Activated CD4-positive, alpha-beta memory T cell treated with anti-CD3 and anti-CD28 coated beads for 36 hours (primary cell): ENCODE measurements at regions of chr5 and their contacts with region 1.

Region 1: GRCh38 chr5:82641331-82642003 is 363.3 kb upstream of the RPS23 start:
- DNase-seq: peak; percentile 12
- H3K4me3 Mint-ChIP-seq: no peak overlapping the region
- H3K27ac Mint-ChIP-seq: no peak overlapping the region
- H3K4me1 Mint-ChIP-seq: no peaks in the 10 kb centered on the region
- H3K27me3 Mint-ChIP-seq: no peaks in the 10 kb centered on the region

Region 2: GRCh38 chr5:82793808-82794419 is 152.4 kb after region 1 on chr5:
- CTCF ChIA-PET with region 1: interaction called, 24 read pairs
- POLR2A ChIA-PET with region 1: no interaction called
- intact Hi-C with region 1: loop called (anchors 1 kb)
- DNase-seq: peak; percentile 44
- H3K4me3 Mint-ChIP-seq: no peak overlapping the region
- H3K27ac Mint-ChIP-seq: no peak overlapping the region
- H3K4me1 Mint-ChIP-seq: no peaks in the 10 kb centered on the region
- H3K27me3 Mint-ChIP-seq: peaks cover 7% of the 10 kb centered on the region

Region 3: DNA sequence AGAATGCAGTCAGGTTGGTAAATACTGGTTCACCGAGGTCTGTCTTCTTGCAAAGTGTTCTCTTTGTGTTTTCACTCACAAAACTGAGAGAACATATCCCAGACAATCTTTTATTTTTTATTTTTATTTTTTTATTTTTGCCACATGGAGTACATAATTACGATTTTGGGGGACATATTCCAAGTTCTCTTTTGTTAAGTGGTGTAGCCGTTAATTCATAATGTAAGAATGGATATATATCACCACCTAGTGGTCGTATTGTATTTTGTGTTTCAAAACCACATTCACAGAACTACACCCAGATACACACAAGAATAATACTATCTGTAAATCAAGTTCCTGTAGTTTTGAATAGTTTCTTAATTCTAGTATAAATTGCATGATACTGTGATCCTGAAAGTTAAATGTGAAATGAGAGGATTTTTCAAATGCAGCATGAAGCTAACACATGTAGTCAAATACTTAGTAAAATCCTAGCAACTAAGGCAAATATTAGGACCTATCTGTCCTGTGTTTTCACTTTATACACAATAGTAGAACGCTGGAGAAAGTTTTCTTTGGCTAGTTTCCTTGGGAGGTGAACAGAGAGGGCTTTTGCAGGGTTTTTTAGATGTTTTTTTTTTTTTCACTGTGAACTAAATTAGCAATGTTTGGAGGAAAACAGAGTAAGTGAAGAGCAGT is 922.7 kb after region 1 on chr5:
- CTCF ChIA-PET with region 1: interaction called, 3 read pairs
- POLR2A ChIA-PET with region 1: no interaction called
- intact Hi-C with region 1: loop called (anchors 1 kb)
- DNase-seq: no peak
- H3K4me3 Mint-ChIP-seq: no peak overlapping the region
- H3K27ac Mint-ChIP-seq: no peak overlapping the region
- H3K4me1 Mint-ChIP-seq: no peaks in the 10 kb centered on the region
- H3K27me3 Mint-ChIP-seq: peaks cover 29% of the 10 kb centered on the region